CD4-positive, alpha-beta memory T cell (primary cell): ENCODE measurements at regions of chr3 and their contacts with region 1.

Region 1: DNA sequence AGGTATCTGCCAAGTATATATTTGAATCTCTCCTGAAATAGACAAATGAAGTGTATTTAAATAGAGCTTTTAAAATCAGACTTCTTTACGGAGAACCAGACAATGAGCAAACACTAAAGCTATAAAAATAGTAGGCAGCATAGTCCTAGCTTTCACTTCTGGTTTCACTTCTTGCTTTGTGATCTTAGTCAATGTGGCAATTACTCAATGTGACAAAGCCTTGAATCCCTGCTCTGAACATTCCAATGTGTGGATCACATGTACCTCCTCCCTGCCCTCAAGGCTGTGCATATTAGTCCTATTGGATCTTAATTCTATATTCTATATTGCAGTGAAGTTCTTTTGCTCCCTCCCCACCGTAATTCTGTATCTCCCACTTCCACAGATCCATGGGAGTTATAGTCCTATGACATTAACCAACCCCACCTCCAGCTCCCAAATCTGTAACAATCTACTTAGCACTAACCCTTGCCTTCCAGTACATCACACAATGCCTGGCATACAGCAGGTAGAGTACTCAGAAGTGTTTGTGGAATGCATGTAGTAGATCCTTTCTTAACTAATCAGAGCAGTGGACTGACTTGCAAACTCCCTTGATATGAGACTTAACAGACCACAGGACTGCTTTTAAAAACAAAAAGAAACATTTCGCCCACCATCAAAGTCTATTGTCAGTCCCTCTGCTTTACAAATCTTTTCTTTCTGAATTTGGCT is 24.3 kb upstream of the CP start:
- DNase-seq: no peak
- H3K4me3 ChIP-seq: no peak overlapping the region
- H3K4me3 Mint-ChIP-seq: peak overlapping the region in 5 of 8 donors; percentile 5 to 56 (median 24)
- H3K27ac ChIP-seq: no peak overlapping the region
- H3K27ac Mint-ChIP-seq: peak overlapping the region in 1 of 7 donors; percentile 39
- H3K4me1 ChIP-seq: no peaks in the 10 kb centered on the region
- H3K4me1 Mint-ChIP-seq: peaks cover 0 to 6% (median 6%) of the 10 kb centered on the region in 4 donors
- H3K27me3 ChIP-seq: no peaks in the 10 kb centered on the region
- H3K27me3 Mint-ChIP-seq: peaks cover 7 to 10% of the 10 kb centered on the region in 2 donors

Region 2: DNA sequence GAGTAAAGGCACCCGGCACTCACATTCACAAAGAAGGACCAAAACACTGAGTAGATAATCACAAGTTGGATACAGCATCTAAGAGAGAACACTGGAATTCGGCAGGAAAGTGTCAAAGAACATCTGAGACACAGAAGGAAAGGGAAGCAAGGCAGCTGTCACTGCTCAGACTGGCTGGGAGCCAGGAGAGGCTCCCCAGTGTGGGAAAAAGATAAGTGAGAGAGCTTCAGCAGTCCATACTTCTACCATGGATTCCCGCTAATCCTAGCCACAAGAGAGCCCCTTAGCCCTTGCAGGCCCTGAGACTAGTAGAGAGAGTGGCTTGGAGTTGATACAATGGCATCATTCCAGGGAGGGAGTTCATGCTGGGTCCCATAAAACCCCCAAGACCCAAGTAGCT is 12.4 kb after region 1 on chr3:
- CTCF ChIA-PET with region 1: no interaction called
- POLR2A ChIA-PET with region 1: no interaction called
- intact Hi-C with region 1: loop called (anchors 2 kb)
- DNase-seq: no peak
- H3K4me3 ChIP-seq: no peak overlapping the region
- H3K4me3 Mint-ChIP-seq: no peak overlapping the region
- H3K27ac ChIP-seq: no peak overlapping the region
- H3K27ac Mint-ChIP-seq: peak overlapping the region in 1 of 7 donors; percentile 73
- H3K4me1 ChIP-seq: no peaks in the 10 kb centered on the region
- H3K4me1 Mint-ChIP-seq: no peaks in the 10 kb centered on the region
- H3K27me3 ChIP-seq: no peaks in the 10 kb centered on the region
- H3K27me3 Mint-ChIP-seq: peaks cover under 1 to 10% of the 10 kb centered on the region in 2 donors

Region 3: GRCh38 chr3:149277331-149277875 is 31.5 kb after region 1 on chr3:
- CTCF ChIA-PET with region 1: no interaction called
- POLR2A ChIA-PET with region 1: no interaction called
- intact Hi-C with region 1: no loop called
- DNase-seq: peak in 4 of 5 donors; percentile 34 to 45 (median 44)
- H3K4me3 ChIP-seq: peak overlapping the region in 1 of 2 donors; percentile 8
- H3K4me3 Mint-ChIP-seq: peak overlapping the region; percentile 73 to 89 (median 82)
- H3K27ac ChIP-seq: peak overlapping the region; percentile 32
- H3K27ac Mint-ChIP-seq: peak overlapping the region; percentile 19 to 97 (median 94)
- H3K4me1 ChIP-seq: peaks cover 17% of the 10 kb centered on the region
- H3K4me1 Mint-ChIP-seq: peaks cover 13 to 19% (median 14%) of the 10 kb centered on the region in 4 donors
- H3K27me3 ChIP-seq: no peaks in the 10 kb centered on the region
- H3K27me3 Mint-ChIP-seq: no peaks in the 10 kb centered on the region